Calu3 (cell line): ENCODE measurements at regions of chr20 and their contacts with region 1.

Region 1: GRCh38 chr20:35604449-35604747 is 11.2 kb upstream of the SPAG4 start:
- DNase-seq: peak; percentile 63
- H3K4me3 Mint-ChIP-seq: no peak overlapping the region
- H3K27ac Mint-ChIP-seq: no peak overlapping the region
- H3K4me1 Mint-ChIP-seq: peaks cover 44% of the 10 kb centered on the region
- H3K27me3 Mint-ChIP-seq: no peaks in the 10 kb centered on the region
- CTCF ChIP-seq: peak; percentile 57

Region 2: DNA sequence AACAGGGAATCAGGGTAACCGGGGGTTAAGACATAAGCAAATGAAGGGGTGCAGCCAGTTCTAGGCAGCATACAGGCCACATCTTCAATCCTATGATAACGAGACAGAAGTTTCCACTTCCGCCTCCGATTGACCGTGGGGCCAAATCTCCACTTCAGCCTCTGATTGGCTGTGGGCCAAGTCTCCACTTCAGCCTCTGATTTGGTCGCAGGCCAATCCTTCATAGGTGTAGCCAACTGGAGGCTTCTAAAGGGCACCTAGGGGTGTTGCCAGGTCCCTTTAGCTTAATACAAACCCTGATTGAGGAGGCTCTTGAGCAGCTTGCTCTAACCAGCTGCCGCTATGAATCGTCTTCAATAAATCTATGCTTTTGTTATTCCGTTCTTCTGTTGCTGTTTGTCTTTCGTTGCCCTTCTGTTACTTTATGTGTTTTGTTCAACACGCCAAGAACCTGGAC is 64.6 kb before region 1 on chr20:
- CTCF ChIA-PET with region 1: no interaction called
- intact Hi-C with region 1: no loop called
- DNase-seq: peak; percentile 94
- H3K4me3 Mint-ChIP-seq: peak overlapping the region; percentile 71
- H3K27ac Mint-ChIP-seq: peak overlapping the region; percentile 85
- H3K4me1 Mint-ChIP-seq: peaks cover 18% of the 10 kb centered on the region
- H3K27me3 Mint-ChIP-seq: no peaks in the 10 kb centered on the region
- CTCF ChIP-seq: no peak

Region 3: DNA sequence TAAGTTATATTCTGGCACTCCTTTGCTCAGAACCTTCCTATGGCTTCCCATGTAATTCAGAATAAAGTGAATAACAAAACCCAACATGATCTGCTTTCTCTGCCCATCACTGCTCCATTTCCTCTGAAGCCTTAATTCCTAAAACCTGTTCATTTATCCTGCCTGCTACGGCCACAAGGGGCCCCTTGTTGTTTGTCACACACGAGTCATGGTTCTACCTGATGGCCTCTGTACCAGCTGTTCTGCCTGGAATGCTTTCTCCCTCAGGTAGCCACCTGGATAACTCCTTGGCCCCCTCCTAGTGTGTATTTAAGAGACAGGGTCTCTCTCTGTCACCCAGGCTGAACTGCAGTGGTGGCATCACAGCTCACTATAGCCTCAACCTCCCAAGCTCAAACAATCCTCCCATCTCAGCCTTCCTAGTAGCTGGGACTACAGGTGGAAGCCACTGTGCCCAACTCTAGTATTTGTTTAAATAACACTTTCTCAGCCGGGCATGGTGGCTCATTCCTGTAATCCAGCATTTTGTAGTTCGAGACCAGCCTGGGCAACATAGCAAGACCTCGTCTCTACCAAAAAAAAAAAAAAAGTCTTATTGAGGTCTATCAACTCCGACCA is 35.6 kb before region 1 on chr20:
- CTCF ChIA-PET with region 1: interaction called, 14 read pairs
- intact Hi-C with region 1: no loop called
- DNase-seq: peak; percentile 62
- H3K4me3 Mint-ChIP-seq: no peak overlapping the region
- H3K27ac Mint-ChIP-seq: no peak overlapping the region
- H3K4me1 Mint-ChIP-seq: peaks cover 8% of the 10 kb centered on the region
- H3K27me3 Mint-ChIP-seq: no peaks in the 10 kb centered on the region
- CTCF ChIP-seq: peak; percentile 74

Region 4: GRCh38 chr20:35629427-35630145 is 25.2 kb after region 1 on chr20:
- CTCF ChIA-PET with region 1: no interaction called
- intact Hi-C with region 1: no loop called
- DNase-seq: no peak
- H3K4me3 Mint-ChIP-seq: no peak overlapping the region
- H3K27ac Mint-ChIP-seq: no peak overlapping the region
- H3K4me1 Mint-ChIP-seq: no peaks in the 10 kb centered on the region
- H3K27me3 Mint-ChIP-seq: no peaks in the 10 kb centered on the region
- CTCF ChIP-seq: no peak